ENCODE measurements at regions of chr17 and their contacts with region 1.

Region 1: DNA sequence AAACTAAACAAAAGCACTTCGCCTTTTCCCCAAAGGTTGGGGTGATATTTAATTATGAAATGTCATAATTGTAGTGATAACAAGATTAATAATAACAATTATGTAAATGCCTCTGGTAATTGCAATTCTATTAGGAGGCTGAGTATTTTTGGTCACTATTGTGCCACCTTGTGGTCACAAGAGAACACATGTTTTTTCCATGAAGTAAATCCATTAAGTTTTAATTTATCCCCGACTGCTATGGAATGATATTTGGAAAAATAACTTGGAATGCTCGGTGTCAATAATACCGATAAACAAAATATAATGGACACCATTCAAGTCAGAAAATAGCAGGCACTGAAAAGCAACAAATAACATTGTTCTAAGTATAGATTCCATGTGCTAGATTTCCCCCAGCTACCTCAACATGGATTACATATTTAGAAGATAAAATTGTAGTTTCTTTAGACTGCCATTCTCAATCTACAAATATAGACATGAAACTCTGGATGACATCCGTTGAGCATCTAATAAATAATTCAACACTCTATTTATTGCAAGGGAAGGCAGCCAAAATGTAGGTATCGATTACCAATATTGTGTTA is 25.0 kb upstream of the KCNJ2 start:
- DNase-seq: no peak
- H3K4me3 Mint-ChIP-seq: no peak overlapping the region
- H3K27ac Mint-ChIP-seq: no peak overlapping the region
- H3K4me1 Mint-ChIP-seq: no peaks in the 10 kb centered on the region
- H3K27me3 Mint-ChIP-seq: peaks cover 6% of the 10 kb centered on the region

Region 2: DNA sequence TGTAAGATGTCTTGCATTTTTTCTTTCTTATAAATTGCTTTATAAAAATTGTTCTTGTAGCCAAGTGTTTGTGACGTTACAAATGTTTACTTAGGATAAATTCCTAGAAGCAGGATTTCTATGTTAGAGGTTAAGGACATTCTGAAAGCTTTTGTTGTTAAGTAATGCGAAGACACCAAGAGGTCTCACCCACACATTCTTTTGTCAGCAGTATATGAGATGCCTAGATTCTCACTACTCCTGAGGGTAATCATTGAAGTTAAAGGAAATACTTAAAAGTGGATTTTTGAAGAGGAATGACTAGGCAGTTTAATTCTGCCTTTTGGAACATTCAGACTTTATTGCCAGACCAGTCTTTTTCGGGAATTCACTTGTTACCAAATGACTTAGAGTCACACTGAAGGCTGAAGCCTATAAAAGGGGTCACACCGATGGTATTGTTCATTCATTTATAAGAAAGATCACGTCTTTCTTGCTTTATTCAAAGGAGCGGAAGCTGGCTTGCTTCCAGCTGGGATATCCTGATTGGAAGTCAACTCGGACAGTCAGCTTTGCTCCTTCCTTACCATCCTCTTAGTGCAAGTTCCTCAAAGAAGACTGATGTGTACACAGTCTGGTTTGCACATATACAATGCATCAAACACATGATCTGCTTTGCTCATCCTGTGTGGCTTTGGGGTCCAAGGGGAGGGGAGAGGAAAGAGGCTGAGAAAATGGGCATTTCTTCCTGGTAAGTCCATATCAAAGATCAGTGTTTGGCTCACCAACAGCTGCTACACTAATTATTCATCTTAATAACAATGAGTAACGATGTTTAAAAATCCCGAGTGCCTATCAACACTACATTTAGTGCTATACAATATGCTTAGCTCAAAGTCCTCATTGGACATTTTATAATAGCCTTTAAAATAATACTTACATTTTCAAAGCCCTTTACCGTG is 569.8 kb before region 1 on chr17:
- intact Hi-C with region 1: loop called (anchors 1 kb)
- DNase-seq: no peak
- H3K4me3 Mint-ChIP-seq: no peak overlapping the region
- H3K27ac Mint-ChIP-seq: no peak overlapping the region
- H3K4me1 Mint-ChIP-seq: no peaks in the 10 kb centered on the region
- H3K27me3 Mint-ChIP-seq: peaks cover 13% of the 10 kb centered on the region

Region 3: DNA sequence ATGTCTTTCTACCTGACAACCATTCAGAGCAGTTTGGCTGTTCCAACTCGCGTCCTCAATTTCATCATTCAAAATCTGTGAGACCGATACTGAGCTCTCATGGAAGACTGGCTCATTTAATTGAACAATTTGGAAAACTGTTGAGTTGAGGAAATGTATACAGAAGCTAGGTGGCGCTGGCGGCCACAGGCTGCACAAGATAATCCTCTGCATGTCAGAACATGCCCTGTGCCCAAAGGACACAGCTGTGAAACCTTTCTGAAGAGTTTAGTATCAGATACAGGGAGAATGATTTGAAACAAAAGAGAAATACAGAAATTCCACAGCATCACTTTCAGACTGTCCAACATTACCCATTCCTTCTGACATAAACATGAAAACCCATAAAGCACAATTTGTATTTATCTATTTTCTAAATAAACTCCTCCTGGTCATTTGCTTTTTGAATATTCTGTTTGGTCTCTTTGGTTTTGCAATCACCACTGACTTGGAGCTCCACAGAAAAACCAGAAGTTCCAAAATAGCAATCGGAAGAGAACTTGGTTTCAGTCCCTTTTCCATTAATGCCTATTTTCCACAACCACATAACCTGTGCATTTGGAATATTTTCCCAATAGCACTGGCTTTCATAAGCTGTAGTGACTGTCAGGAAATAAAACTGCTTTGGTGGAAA is 537.1 kb before region 1 on chr17:
- intact Hi-C with region 1: loop called (anchors 2 kb)
- DNase-seq: peak; percentile 84
- H3K4me3 Mint-ChIP-seq: no peak overlapping the region
- H3K27ac Mint-ChIP-seq: peak overlapping the region; percentile 76
- H3K4me1 Mint-ChIP-seq: peaks cover 18% of the 10 kb centered on the region
- H3K27me3 Mint-ChIP-seq: no peaks in the 10 kb centered on the region

Region 4: DNA sequence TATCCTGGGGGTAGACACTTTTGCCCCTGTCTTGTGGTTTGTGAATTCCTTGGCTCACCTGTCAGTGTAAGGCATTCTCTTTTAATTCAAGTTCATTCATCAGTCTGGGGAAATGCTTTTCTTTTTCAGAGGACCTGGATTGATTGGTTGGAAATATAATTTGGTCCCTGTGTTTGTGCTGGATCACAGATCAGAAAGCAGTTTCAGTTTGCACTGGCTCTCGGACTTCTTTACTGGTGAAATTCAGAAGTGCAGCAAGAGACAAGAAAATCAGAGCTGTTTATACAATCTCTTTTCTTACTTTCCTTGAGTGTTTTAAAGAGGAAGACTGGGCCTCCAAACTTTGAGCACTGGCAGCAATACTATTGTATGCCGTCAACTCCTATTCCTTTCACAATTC is 231.1 kb before region 1 on chr17:
- intact Hi-C with region 1: no loop called
- DNase-seq: no peak
- H3K4me3 Mint-ChIP-seq: no peak overlapping the region
- H3K27ac Mint-ChIP-seq: no peak overlapping the region
- H3K4me1 Mint-ChIP-seq: no peaks in the 10 kb centered on the region
- H3K27me3 Mint-ChIP-seq: no peaks in the 10 kb centered on the region

Region 5: GRCh38 chr17:70119983-70120382 is 24.4 kb before region 1 on chr17:
- intact Hi-C with region 1: no loop called
- DNase-seq: no peak
- H3K4me3 Mint-ChIP-seq: no peak overlapping the region
- H3K27ac Mint-ChIP-seq: no peak overlapping the region
- H3K4me1 Mint-ChIP-seq: no peaks in the 10 kb centered on the region
- H3K27me3 Mint-ChIP-seq: no peaks in the 10 kb centered on the region